Ovary (tissue), 10 donors: ENCODE measurements at regions of chr2 and their contacts with region 1.

Region 1: DNA sequence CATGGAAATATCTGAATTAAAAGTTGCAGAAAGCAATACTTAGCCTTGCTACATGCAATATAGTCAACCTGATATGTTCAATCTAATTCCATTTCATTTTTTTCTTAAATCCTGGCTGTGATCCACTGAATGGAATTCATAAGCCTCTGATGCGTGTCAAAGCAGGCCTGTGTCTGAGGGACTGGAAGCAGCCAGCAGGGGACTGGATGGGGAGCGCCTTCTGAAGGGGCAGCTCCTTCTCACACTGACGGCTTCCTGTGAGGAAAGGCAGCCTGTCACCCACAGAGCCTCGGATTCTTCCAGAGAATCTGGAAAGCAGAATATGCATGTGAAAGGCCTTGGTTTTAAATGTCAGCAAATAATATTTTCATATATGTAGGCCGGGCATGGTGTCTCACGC is 73.5 kb downstream of the KCNF1 start:
- DNase-seq: no peak
- H3K4me3 ChIP-seq: no peak overlapping the region
- H3K27ac ChIP-seq: no peak overlapping the region
- H3K4me1 ChIP-seq: no peaks in the 10 kb centered on the region
- H3K27me3 ChIP-seq: no peaks in the 10 kb centered on the region
- CTCF ChIP-seq: no peak
- EP300 ChIP-seq: no peak
- POLR2A ChIP-seq: no peak

Region 2: GRCh38 chr2:10942341-10942871 is 42.9 kb before region 1 on chr2:
- intact Hi-C with region 1: loop called in 1 of 4 experiments (anchors 2 kb)
- DNase-seq: no peak
- H3K4me3 ChIP-seq: no peak overlapping the region
- H3K27ac ChIP-seq: no peak overlapping the region
- H3K4me1 ChIP-seq: no peaks in the 10 kb centered on the region
- H3K27me3 ChIP-seq: no peaks in the 10 kb centered on the region
- CTCF ChIP-seq: no peak
- EP300 ChIP-seq: no peak
- POLR2A ChIP-seq: no peak